ENCODE measurements at regions of chr5 and their contacts with region 1.

Region 1: GRCh38 chr5:140174465-140175366 is at the start of gene CYSTM1:
- DNase-seq: peak; percentile 83 to 97
- H3K4me3 ChIP-seq: peak within 1 kb of the TSS; percentile 99
- H3K27ac ChIP-seq: peak within 1 kb of the TSS; percentile 51
- H3K4me1 ChIP-seq: peaks cover 22% of the 10 kb centered on the region
- H3K27me3 ChIP-seq: no peaks in the 10 kb centered on the region
- CTCF ChIP-seq: no peak
- total RNA-seq, gene CYSTM1: 27.2 and 29.8 TPM in 2 replicates

Region 2: DNA sequence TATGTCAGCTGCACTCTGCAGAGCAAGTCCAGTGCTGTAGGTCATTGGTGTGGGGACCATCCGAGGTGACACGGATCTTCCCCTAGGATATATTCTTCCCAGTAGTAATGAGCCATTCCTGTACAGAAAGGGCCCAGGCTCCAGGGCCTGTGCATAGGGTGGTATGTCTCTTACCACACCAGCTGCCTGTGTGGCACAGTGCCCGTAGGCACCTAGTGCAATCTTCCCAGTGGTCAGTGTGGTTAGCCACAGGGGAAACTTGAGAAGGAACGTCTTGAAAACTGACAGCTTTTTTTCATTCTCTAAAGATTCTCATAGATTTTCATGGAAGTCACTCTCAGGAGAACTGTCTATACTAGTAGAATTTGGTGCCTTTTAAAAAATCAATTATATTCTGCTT is 40.1 kb after region 1 on chr5:
- CTCF ChIA-PET with region 1: no interaction called
- POLR2A ChIA-PET with region 1: no interaction called
- intact Hi-C with region 1: loop called (anchors 2 kb)
- DNase-seq: peak; percentile 69 to 73
- H3K4me3 ChIP-seq: no peak overlapping the region
- H3K27ac ChIP-seq: no peak overlapping the region
- H3K4me1 ChIP-seq: peaks cover 20% of the 10 kb centered on the region
- H3K27me3 ChIP-seq: no peaks in the 10 kb centered on the region
- CTCF ChIP-seq: no peak

Region 3: GRCh38 chr5:140244525-140245025 is 69.9 kb after region 1 on chr5:
- CTCF ChIA-PET with region 1: interaction called, 13 read pairs
- POLR2A ChIA-PET with region 1: no interaction called
- intact Hi-C with region 1: loop called (anchors 5 kb)
- DNase-seq: peak; percentile 77 to 82
- H3K4me3 ChIP-seq: no peak overlapping the region
- H3K27ac ChIP-seq: no peak overlapping the region
- H3K4me1 ChIP-seq: peaks cover 45% of the 10 kb centered on the region
- H3K27me3 ChIP-seq: no peaks in the 10 kb centered on the region
- CTCF ChIP-seq: peak; percentile 91

Region 4: DNA sequence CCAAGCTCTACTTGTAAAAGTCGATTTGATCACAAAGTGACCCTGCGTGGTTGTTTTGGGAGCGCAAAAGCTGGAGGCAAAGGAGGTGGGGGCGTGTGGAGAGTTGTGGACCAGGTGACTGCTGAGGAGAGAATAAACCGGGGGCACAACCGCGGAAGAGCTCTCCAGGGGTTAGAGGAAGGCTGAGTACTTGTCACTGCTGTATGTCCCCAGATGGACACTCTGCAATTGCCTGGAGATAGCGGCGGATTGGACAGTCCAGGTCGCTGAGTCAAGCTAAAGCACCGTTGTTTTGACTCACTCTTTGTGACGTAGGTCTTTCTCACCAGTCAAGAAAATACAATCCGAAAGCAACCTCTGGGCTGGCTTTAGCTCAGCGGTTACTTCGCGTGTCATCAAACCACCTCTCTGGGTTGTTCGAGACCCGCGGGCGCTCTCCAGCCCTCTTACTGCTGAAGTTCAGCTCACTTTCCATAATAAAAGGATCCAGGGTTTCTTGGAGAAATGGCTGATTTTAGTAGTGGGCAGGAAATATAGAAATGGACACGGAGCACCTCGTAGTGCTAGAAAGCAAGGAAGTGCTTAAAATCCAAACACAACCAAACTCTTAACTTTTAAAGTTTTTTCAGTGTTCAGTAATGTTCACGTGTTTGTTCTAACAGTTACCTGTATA is 551.2 kb after region 1 on chr5:
- CTCF ChIA-PET with region 1: no interaction called
- POLR2A ChIA-PET with region 1: no interaction called
- intact Hi-C with region 1: loop called (anchors 5 kb)
- DNase-seq: peak; percentile 87 to 94
- H3K4me3 ChIP-seq: peak overlapping the region; percentile 61; the same call in 1 of the 2 replicates
- H3K27ac ChIP-seq: no peak overlapping the region
- H3K4me1 ChIP-seq: no peaks in the 10 kb centered on the region
- H3K27me3 ChIP-seq: no peaks in the 10 kb centered on the region
- CTCF ChIP-seq: no peak

Measured in PC-9 (cell line).